CD8-positive, alpha-beta T cell (primary cell): ENCODE measurements at regions of chr10 and their contacts with region 1.

Region 1: GRCh38 chr10:48306265-48306869 is at the start of gene MAPK8:
- DNase-seq: peak; percentile 83 to 97 (median 91)
- ATAC-seq: peak; percentile 87
- H3K4me3 ChIP-seq: peak within 1 kb of the TSS; percentile 61 to 77
- H3K4me3 Mint-ChIP-seq: peak within 1 kb of the TSS; percentile 87
- H3K27ac ChIP-seq: peak within 1 kb of the TSS; percentile 75 to 77
- H3K27ac Mint-ChIP-seq: peak within 1 kb of the TSS; percentile 83
- H3K4me1 ChIP-seq: peaks cover 18% of the 10 kb centered on the region
- H3K4me1 Mint-ChIP-seq: peaks cover 27% of the 10 kb centered on the region
- H3K27me3 ChIP-seq: no peaks in the 10 kb centered on the region
- H3K27me3 Mint-ChIP-seq: no peaks in the 10 kb centered on the region
- CTCF ChIP-seq: no peak
- total RNA-seq, gene MAPK8: 50.1 to 54.7 TPM

Region 2: DNA sequence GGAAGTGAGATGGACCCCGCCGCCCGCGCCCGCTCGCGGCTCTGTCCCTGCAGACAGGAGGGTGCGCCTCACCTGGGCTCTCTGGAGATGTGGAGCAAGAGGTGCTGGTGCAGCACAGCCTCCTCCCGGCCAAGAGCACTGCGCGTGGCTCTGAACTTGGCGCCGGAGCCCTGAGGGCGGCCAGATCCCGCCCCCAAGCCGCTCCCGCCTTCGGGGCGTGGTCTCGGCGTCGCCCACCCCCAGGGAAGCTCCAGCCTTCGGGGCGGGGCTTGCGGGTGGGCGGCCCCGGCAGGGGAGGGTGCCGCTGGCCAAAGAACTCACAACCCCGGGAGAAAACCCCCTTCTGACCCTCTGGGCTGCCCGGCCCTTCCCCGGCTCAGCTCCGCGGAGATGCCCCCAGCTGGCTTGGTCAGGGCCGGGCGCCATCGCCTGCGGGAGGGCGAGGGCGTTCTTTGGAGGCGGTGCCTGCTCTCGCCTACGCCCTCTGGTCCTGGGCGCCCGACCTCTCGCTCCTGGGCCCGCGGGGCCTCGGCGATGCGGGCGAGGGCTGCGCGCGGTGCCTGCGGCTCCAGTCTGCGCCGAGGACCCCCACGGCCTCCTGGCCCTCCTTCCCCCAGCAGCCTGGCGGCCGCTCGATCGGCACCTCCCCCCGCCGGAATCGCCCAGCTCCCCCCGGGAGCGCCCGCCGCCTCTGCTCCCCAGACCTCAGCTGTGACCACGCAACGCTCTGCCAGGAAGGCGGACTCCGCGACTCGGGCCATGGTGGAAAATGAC is 922.0 kb before region 1 on chr10 and contains the start of gene ZNF488:
- CTCF ChIA-PET with region 1: no interaction called
- POLR2A ChIA-PET with region 1: no interaction called
- intact Hi-C with region 1: loop called in 1 of 2 experiments (anchors 10 kb)
- DNase-seq: peak; percentile 34 to 85 (median 65)
- ATAC-seq: peak; percentile 94
- H3K4me3 ChIP-seq: peak within 1 kb of the TSS; percentile 60 to 73
- H3K4me3 Mint-ChIP-seq: peak within 1 kb of the TSS; percentile 91
- H3K27ac ChIP-seq: no peak within 1 kb of the TSS
- H3K27ac Mint-ChIP-seq: no peak within 1 kb of the TSS
- H3K4me1 ChIP-seq: no peaks in the 10 kb centered on the region
- H3K4me1 Mint-ChIP-seq: peaks cover 9% of the 10 kb centered on the region
- H3K27me3 ChIP-seq: no peaks in the 10 kb centered on the region
- H3K27me3 Mint-ChIP-seq: peaks cover 31% of the 10 kb centered on the region
- CTCF ChIP-seq: no peak
- total RNA-seq, gene ZNF488: not detected

Region 3: DNA sequence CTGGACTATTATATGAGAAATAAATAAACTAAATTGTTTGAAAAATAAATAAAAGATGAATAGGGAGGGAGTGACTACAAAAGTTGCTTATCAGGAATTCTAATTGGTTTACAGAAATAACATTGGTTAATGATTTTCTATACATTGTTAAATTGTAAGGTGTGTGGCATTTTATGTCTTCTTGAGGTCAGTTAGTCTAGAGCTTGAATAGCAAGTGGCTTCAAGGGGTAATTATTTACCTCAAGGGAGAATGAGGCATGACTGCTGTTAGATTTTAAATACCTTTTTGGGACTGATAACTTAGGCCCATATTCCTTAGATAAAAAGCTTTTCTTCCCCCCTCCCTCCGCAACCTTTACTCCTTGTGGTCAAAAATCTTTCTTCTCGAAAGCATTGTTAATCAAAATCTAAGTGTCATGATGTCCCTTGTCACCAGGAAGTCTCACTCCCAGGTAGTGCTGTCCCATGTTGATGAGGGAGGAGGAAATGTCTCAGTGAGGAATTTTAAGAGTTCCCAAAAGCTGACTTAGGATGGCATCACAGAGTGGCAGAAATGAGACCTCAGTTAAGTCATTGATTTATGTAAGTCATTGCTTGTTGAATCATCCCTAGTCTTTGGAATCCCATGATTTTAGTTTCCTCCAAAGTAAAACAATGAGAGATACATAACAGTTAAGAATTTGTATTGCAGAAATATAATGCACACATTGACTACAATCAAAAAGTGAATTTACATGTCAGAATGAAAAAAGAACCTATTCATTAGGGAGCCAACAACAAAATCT is 71.6 kb after region 1 on chr10:
- CTCF ChIA-PET with region 1: no interaction called
- POLR2A ChIA-PET with region 1: no interaction called
- intact Hi-C with region 1: no loop called
- DNase-seq: no peak
- ATAC-seq: no peak
- H3K4me3 ChIP-seq: no peak overlapping the region
- H3K4me3 Mint-ChIP-seq: no peak overlapping the region
- H3K27ac ChIP-seq: no peak overlapping the region
- H3K27ac Mint-ChIP-seq: no peak overlapping the region
- H3K4me1 ChIP-seq: no peaks in the 10 kb centered on the region
- H3K4me1 Mint-ChIP-seq: peaks cover 2% of the 10 kb centered on the region
- H3K27me3 ChIP-seq: no peaks in the 10 kb centered on the region
- H3K27me3 Mint-ChIP-seq: no peaks in the 10 kb centered on the region
- CTCF ChIP-seq: no peak

Region 4: GRCh38 chr10:48390933-48391845 is 84.8 kb after region 1 on chr10:
- CTCF ChIA-PET with region 1: no interaction called
- POLR2A ChIA-PET with region 1: no interaction called
- intact Hi-C with region 1: loop called in 1 of 2 experiments (anchors 5 kb)
- DNase-seq: peak in 2 of 9 experiments; percentile 7 to 14
- ATAC-seq: peak; percentile 34
- H3K4me3 ChIP-seq: no peak overlapping the region
- H3K4me3 Mint-ChIP-seq: peak overlapping the region; percentile 1
- H3K27ac ChIP-seq: no peak overlapping the region
- H3K27ac Mint-ChIP-seq: no peak overlapping the region
- H3K4me1 ChIP-seq: peaks cover 24% of the 10 kb centered on the region
- H3K4me1 Mint-ChIP-seq: peaks cover 58% of the 10 kb centered on the region
- H3K27me3 ChIP-seq: no peaks in the 10 kb centered on the region
- H3K27me3 Mint-ChIP-seq: no peaks in the 10 kb centered on the region
- CTCF ChIP-seq: no peak

Region 5: DNA sequence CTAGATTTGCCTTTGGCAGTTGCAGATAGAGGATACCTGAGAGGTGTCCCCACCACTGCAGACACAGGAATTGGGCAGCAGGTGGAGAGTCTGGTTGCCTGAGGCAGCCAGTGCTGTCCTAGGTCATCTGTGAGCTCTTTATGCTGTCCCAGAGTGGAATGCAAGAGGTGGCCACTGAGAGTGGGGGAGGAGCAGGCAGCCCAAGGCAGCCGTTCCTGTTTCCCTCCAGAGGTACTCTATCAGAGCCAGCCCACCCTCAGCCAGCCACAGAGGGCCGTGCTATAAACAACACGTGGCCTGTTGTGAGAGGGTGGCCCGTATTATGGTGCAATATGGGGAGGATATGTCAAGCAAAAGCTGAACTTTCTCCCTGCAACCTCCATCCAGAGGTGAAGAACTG is 624.8 kb after region 1 on chr10:
- CTCF ChIA-PET with region 1: no interaction called
- POLR2A ChIA-PET with region 1: no interaction called
- intact Hi-C with region 1: no loop called
- DNase-seq: peak in 1 of 9 experiments; percentile 32
- ATAC-seq: no peak
- H3K4me3 ChIP-seq: no peak overlapping the region
- H3K4me3 Mint-ChIP-seq: no peak overlapping the region
- H3K27ac ChIP-seq: no peak overlapping the region
- H3K27ac Mint-ChIP-seq: no peak overlapping the region
- H3K4me1 ChIP-seq: no peaks in the 10 kb centered on the region
- H3K4me1 Mint-ChIP-seq: no peaks in the 10 kb centered on the region
- H3K27me3 ChIP-seq: no peaks in the 10 kb centered on the region
- H3K27me3 Mint-ChIP-seq: peaks cover 6% of the 10 kb centered on the region
- CTCF ChIP-seq: no peak

Region 6: DNA sequence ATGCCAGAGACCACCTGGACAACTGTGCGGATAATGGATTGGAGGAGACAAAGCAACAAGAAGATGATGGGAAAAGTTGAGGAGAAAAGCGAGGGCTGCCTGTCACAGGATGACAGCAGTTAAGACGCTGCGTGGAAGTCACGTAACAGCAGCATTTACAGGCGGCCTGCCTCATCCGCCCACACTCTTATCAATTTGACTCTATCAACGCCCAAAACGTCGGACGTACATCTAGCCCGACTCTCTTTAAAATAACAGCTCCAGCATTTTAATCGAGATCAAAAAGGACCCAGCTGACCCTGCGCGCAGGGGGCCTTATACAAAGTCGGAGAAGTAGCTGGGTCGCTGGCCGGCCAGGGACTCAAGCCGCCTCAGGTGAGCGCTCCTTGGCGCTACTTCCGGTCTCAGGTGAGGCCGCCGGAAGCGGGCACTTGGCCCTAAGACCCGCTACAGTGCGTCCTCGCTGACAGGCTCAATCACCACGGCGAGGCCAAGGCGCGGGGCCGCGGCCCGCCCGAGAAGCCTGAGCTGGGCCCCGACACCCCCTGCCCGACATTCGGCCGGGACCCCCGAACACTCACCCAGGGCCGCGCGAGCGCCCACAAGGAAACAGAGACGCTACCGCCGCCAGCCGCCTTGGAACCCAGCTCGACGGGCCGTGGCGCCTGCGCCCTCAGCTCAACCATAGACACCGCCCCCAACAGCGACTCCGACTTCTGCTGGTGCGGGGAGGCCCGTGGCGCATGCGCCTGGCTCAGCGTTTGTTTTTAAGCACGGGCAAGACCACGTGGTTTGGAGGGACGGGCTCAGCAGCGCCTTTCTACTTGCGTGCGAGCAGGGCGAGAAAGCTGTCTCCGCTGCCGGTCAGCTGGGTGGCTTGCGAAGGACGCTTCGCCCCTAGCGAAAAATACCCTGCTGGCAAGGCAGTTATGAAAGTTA is 1232.3 kb after region 1 on chr10 and contains the start of gene ERCC6:
- CTCF ChIA-PET with region 1: no interaction called
- POLR2A ChIA-PET with region 1: no interaction called
- intact Hi-C with region 1: loop called (anchors 1 to 2 kb)
- DNase-seq: peak; percentile 93 to 98 (median 96)
- ATAC-seq: peak; percentile 95
- H3K4me3 ChIP-seq: peak within 1 kb of the TSS; percentile 75 to 77
- H3K4me3 Mint-ChIP-seq: peak within 1 kb of the TSS; percentile 96
- H3K27ac ChIP-seq: peak within 1 kb of the TSS; percentile 72 to 84
- H3K27ac Mint-ChIP-seq: peak within 1 kb of the TSS; percentile 96
- H3K4me1 ChIP-seq: peaks cover 9% of the 10 kb centered on the region
- H3K4me1 Mint-ChIP-seq: peaks cover 43% of the 10 kb centered on the region
- H3K27me3 ChIP-seq: no peaks in the 10 kb centered on the region
- H3K27me3 Mint-ChIP-seq: peaks cover 13% of the 10 kb centered on the region
- CTCF ChIP-seq: no peak
- total RNA-seq, gene ERCC6: 37.2 to 38.7 TPM